ENCODE measurements at regions of chr5 and their contacts with region 1.

Region 1: DNA sequence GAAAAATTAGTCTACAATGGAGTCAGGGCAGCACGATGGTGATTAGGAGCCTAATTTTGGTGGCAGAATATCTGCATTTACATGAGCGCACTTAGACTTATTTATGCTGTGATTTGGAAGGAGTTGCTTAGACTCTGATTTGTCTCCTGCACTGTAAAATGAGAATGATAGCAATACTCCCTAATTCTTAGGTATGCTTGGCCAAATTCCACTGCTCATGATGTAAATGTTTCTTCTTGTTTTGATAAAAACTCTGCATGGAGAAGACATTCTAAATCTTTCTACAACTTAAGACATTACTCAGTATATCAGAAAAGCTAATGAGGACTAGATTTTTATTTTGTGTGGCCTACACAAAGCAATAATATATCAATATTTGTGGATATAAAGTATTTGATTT is 205.4 kb downstream of the CDH18 start:
- DNase-seq: no peak
- H3K4me3 ChIP-seq: no peak overlapping the region
- H3K27ac ChIP-seq: no peak overlapping the region
- H3K4me1 ChIP-seq: no peaks in the 10 kb centered on the region
- H3K27me3 ChIP-seq: no peaks in the 10 kb centered on the region
- CTCF ChIP-seq: no peak

Region 2: GRCh38 chr5:19726778-19727177 is 55.8 kb before region 1 on chr5:
- CTCF ChIA-PET with region 1: no interaction called
- POLR2A ChIA-PET with region 1: no interaction called
- intact Hi-C with region 1: no loop called
- DNase-seq: peak in 1 of 2 experiments; percentile 63
- H3K4me3 ChIP-seq: no peak overlapping the region
- H3K27ac ChIP-seq: no peak overlapping the region
- H3K4me1 ChIP-seq: peaks cover 11% of the 10 kb centered on the region
- H3K27me3 ChIP-seq: no peaks in the 10 kb centered on the region
- CTCF ChIP-seq: no peak

Region 3: GRCh38 chr5:20572614-20573013 is 790.0 kb after region 1 on chr5:
- CTCF ChIA-PET with region 1: no interaction called
- POLR2A ChIA-PET with region 1: no interaction called
- intact Hi-C with region 1: loop called (anchors 10 kb)
- DNase-seq: peak in 1 of 2 experiments; percentile 78
- H3K4me3 ChIP-seq: no peak overlapping the region
- H3K27ac ChIP-seq: no peak overlapping the region
- H3K4me1 ChIP-seq: peaks cover 10% of the 10 kb centered on the region; the same call in 1 of the 2 replicates
- H3K27me3 ChIP-seq: no peaks in the 10 kb centered on the region
- CTCF ChIP-seq: peak; percentile 25; the same call in 1 of the 2 replicates